CD4-positive, alpha-beta memory T cell (primary cell): ENCODE measurements at regions of chr1 and their contacts with region 1.

Region 1: DNA sequence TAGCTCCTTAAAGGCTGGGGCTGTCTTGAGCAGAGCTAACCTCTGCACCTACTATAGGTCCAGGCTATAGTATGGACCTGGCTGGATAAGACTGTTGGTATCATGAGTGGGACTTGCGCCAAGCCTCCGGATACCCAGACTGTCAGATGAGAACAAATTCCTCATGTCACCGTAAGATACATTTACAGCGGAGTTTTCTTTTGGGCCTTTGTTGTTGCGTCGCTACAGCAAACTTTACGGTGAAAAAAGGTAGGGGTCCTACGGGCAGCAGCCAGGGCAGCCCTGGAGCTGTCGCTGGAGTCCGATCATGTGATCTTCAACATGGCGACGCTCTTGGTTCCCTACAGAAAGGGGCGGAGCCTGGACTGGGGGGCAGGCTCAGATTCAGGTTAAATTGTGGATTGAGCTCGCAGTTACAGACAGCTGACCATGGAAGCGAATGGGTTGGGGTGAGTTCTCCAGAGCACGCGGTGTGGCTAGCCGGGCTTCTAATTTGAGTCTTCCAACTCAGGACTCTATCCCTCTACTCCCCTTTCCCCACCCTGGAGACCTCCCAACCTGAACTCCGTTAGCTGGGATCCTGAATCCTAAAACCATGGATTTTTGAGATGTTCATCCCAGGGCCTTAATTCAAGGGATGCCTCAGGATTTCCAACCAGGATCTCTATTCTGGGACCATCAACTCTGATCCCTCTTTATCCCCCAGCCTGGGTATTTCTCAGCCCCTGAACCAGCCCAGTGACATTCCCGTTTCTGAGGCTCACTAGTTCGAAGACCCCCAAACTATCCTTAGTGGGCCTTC is at the start of gene UROD:
- DNase-seq: peak; percentile 87 to 95 (median 91)
- H3K4me3 ChIP-seq: peak within 1 kb of the TSS; percentile 86 to 98
- H3K4me3 Mint-ChIP-seq: peak within 1 kb of the TSS; percentile 88 to 98 (median 96)
- H3K27ac ChIP-seq: peak within 1 kb of the TSS; percentile 71
- H3K27ac Mint-ChIP-seq: peak within 1 kb of the TSS; percentile 91 to 99 (median 96)
- H3K4me1 ChIP-seq: peaks cover 40% of the 10 kb centered on the region
- H3K4me1 Mint-ChIP-seq: peaks cover 29 to 60% (median 48%) of the 10 kb centered on the region in 4 donors
- H3K27me3 ChIP-seq: no peaks in the 10 kb centered on the region
- H3K27me3 Mint-ChIP-seq: no peaks in the 10 kb centered on the region
- total RNA-seq, gene UROD: 46.0 to 52.0 TPM

Region 2: GRCh38 chr1:44730741-44731512 is 281.1 kb before region 1 on chr1 and contains the start of gene RNU5D-1:
- CTCF ChIA-PET with region 1: interaction called, 24 read pairs
- POLR2A ChIA-PET with region 1: interaction called, 28 read pairs
- intact Hi-C with region 1: loop called (anchors 5 kb)
- DNase-seq: peak; percentile 90 to 94 (median 91)
- H3K4me3 ChIP-seq: peak within 1 kb of the TSS; percentile 31 to 39
- H3K4me3 Mint-ChIP-seq: peak within 1 kb of the TSS; percentile 54 to 93 (median 84)
- H3K27ac ChIP-seq: peak within 1 kb of the TSS; percentile 96
- H3K27ac Mint-ChIP-seq: peak within 1 kb of the TSS; percentile 97 to 100 (median 99)
- H3K4me1 ChIP-seq: peaks cover 22% of the 10 kb centered on the region
- H3K4me1 Mint-ChIP-seq: peaks cover 18 to 38% (median 24%) of the 10 kb centered on the region in 4 donors
- H3K27me3 ChIP-seq: no peaks in the 10 kb centered on the region
- H3K27me3 Mint-ChIP-seq: no peaks in the 10 kb centered on the region
- total RNA-seq, gene RNU5D-1: not detected

Region 3: GRCh38 chr1:44799770-44800584 is 212.1 kb before region 1 on chr1 and contains the start of gene PLK3:
- CTCF ChIA-PET with region 1: interaction called, 23 read pairs
- POLR2A ChIA-PET with region 1: interaction called, 63 read pairs
- intact Hi-C with region 1: loop called (anchors 2 kb)
- DNase-seq: peak; percentile 99 to 100 (median 99)
- H3K4me3 ChIP-seq: peak within 1 kb of the TSS; percentile 77 to 83
- H3K4me3 Mint-ChIP-seq: peak within 1 kb of the TSS; percentile 89 to 99 (median 96)
- H3K27ac ChIP-seq: peak within 1 kb of the TSS; percentile 96
- H3K27ac Mint-ChIP-seq: peak within 1 kb of the TSS; percentile 82 to 100 (median 99)
- H3K4me1 ChIP-seq: peaks cover 37% of the 10 kb centered on the region
- H3K4me1 Mint-ChIP-seq: peaks cover 23 to 48% (median 31%) of the 10 kb centered on the region in 4 donors
- H3K27me3 ChIP-seq: no peaks in the 10 kb centered on the region
- H3K27me3 Mint-ChIP-seq: no peaks in the 10 kb centered on the region
- total RNA-seq, gene PLK3: 151 to 153 TPM

Region 4: DNA sequence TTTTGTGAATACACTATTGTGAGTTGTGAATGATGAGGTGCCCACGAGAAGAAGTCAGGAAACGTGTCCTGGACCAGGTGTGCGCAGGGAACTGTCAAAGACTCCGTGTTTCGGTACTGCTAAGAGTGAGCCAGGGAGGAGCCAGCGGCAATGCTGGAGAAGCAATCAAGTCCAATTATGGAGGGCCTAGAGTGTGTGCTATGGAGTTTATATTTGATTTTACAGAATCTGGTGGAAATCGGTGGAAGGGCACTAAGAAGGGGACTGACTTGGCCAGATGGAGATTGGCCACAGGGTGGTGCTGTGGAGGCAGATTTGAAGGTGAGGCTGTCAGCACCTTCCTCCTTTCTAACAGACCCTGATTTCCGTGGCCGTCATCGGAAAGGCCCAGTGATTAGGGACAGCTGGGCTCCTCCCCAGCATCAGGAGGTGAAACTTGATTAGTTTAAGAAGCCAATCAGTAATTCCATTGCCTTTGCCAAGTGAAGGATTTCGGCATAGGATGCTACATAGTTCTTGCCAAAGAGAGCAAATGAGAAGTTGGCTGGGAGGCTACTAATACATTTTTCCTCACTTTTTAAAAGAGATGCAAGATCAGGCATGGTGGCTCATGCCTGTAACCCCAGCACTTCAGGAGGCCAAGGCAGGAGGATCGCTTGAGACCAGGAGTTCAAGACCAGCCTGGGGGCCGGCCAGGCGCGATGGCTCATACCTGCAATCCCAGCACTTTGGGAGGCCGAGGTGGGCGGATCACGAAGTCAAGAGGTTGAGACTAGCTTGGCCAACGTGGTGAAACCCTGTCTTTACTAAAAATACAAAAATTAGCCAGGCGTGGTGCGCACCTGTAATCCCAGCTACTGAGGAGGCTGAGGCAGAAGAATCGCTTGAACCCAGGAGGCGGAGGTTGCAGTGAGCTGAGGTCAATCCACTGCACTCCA is 176.0 kb before region 1 on chr1:
- CTCF ChIA-PET with region 1: interaction called, 4 read pairs
- POLR2A ChIA-PET with region 1: no interaction called
- intact Hi-C with region 1: loop called (anchors 2 kb)
- DNase-seq: peak; percentile 71 to 83 (median 75)
- H3K4me3 ChIP-seq: no peak overlapping the region
- H3K4me3 Mint-ChIP-seq: peak overlapping the region in 4 of 8 donors; percentile 19 to 69 (median 42)
- H3K27ac ChIP-seq: no peak overlapping the region
- H3K27ac Mint-ChIP-seq: peak overlapping the region in 6 of 7 donors; percentile 7 to 74 (median 58)
- H3K4me1 ChIP-seq: peaks cover 4% of the 10 kb centered on the region
- H3K4me1 Mint-ChIP-seq: peaks cover 5 to 9% (median 8%) of the 10 kb centered on the region in 4 donors
- H3K27me3 ChIP-seq: no peaks in the 10 kb centered on the region
- H3K27me3 Mint-ChIP-seq: peaks cover 5 to 10% of the 10 kb centered on the region in 2 donors

Region 5: DNA sequence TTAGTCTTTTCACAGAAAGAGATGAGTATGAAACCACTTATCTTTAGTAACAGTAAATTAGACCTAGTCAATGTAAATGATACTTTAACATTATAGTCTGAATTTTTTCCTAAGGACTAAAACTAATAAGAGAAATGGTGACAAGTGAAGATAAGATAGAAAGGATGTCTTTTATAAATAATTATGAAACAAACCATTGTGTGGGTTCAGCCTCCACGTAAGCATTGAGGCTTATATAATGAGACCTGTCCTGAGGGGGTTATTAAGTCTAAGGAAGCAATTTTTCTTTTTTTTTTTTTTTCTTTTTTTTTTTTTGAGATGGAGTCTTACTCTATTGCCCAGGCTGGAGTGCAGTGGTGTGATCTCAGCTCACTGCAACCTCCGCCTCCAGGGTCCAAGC is 55.8 kb after region 1 on chr1:
- CTCF ChIA-PET with region 1: no interaction called
- POLR2A ChIA-PET with region 1: no interaction called
- intact Hi-C with region 1: no loop called
- DNase-seq: no peak
- H3K4me3 ChIP-seq: no peak overlapping the region
- H3K4me3 Mint-ChIP-seq: no peak overlapping the region
- H3K27ac ChIP-seq: no peak overlapping the region
- H3K27ac Mint-ChIP-seq: no peak overlapping the region
- H3K4me1 ChIP-seq: no peaks in the 10 kb centered on the region
- H3K4me1 Mint-ChIP-seq: no peaks in the 10 kb centered on the region
- H3K27me3 ChIP-seq: no peaks in the 10 kb centered on the region
- H3K27me3 Mint-ChIP-seq: no peaks in the 10 kb centered on the region

Region 6: DNA sequence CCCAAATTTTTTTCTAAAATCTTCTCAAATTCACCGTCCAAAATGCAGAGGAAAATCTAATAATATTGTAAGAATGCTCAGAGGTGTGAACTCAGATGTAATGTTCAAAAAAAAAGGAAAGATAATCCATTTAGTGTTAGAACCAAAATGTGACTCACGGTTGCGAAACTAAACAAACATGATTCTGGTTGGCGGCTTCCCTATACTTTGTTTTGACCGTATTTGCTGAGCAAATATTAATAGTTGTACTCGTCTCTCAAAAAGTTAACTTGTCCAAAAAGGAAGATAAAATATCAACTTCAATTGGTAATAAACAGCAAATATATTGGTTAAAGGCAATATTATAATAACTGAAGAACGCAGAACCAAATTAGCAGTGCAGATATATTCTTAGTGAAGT is 160.0 kb after region 1 on chr1:
- CTCF ChIA-PET with region 1: no interaction called
- POLR2A ChIA-PET with region 1: no interaction called
- intact Hi-C with region 1: no loop called
- DNase-seq: no peak
- H3K4me3 ChIP-seq: no peak overlapping the region
- H3K4me3 Mint-ChIP-seq: no peak overlapping the region
- H3K27ac ChIP-seq: no peak overlapping the region
- H3K27ac Mint-ChIP-seq: no peak overlapping the region
- H3K4me1 ChIP-seq: no peaks in the 10 kb centered on the region
- H3K4me1 Mint-ChIP-seq: peaks cover 0 to 6% (median 2%) of the 10 kb centered on the region in 4 donors
- H3K27me3 ChIP-seq: no peaks in the 10 kb centered on the region
- H3K27me3 Mint-ChIP-seq: no peaks in the 10 kb centered on the region

Region 7: GRCh38 chr1:45230540-45230939 is 218.5 kb after region 1 on chr1:
- CTCF ChIA-PET with region 1: interaction called, 9 read pairs
- POLR2A ChIA-PET with region 1: no interaction called
- intact Hi-C with region 1: loop called (anchors 1 kb)
- DNase-seq: peak in 4 of 5 donors; percentile 11 to 26 (median 16)
- H3K4me3 ChIP-seq: no peak overlapping the region
- H3K4me3 Mint-ChIP-seq: no peak overlapping the region
- H3K27ac ChIP-seq: no peak overlapping the region
- H3K27ac Mint-ChIP-seq: no peak overlapping the region
- H3K4me1 ChIP-seq: no peaks in the 10 kb centered on the region
- H3K4me1 Mint-ChIP-seq: no peaks in the 10 kb centered on the region
- H3K27me3 ChIP-seq: no peaks in the 10 kb centered on the region
- H3K27me3 Mint-ChIP-seq: peaks cover 0 to 1% of the 10 kb centered on the region in 2 donors

Region 8: DNA sequence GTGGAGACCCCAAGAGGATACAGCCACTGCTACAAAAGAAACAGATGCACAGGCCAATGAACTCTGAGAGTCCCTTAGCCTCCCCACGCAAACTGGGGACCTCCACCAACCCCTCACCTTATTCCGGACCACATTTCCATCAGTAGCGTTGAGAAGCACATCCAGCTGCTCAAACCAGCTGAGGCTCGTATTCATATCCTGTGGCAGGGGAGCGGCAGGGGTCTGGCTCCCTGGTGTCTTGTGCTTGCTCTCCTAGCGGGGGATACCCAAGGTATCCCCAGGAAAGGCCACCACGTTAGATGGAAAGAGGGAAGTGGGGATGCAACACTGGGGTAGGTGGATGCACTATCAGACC is 487.4 kb after region 1 on chr1:
- CTCF ChIA-PET with region 1: interaction called, 122 read pairs
- POLR2A ChIA-PET with region 1: interaction called, 33 read pairs
- intact Hi-C with region 1: no loop called
- DNase-seq: peak in 1 of 5 donors; percentile 4
- H3K4me3 ChIP-seq: peak overlapping the region; percentile 62 to 88
- H3K4me3 Mint-ChIP-seq: peak overlapping the region; percentile 91 to 96 (median 95)
- H3K27ac ChIP-seq: peak overlapping the region; percentile 62
- H3K27ac Mint-ChIP-seq: peak overlapping the region; percentile 81 to 98 (median 96)
- H3K4me1 ChIP-seq: peaks cover 18% of the 10 kb centered on the region
- H3K4me1 Mint-ChIP-seq: peaks cover 31 to 34% (median 31%) of the 10 kb centered on the region in 4 donors
- H3K27me3 ChIP-seq: no peaks in the 10 kb centered on the region
- H3K27me3 Mint-ChIP-seq: no peaks in the 10 kb centered on the region

Region 9: GRCh38 chr1:45686317-45687013 is 674.4 kb after region 1 on chr1 and contains the start of gene GPBP1L1:
- CTCF ChIA-PET with region 1: no interaction called
- POLR2A ChIA-PET with region 1: interaction called, 6 read pairs
- intact Hi-C with region 1: loop called (anchors 1 kb)
- DNase-seq: peak; percentile 97 to 98 (median 97)
- H3K4me3 ChIP-seq: peak within 1 kb of the TSS; percentile 99 to 100
- H3K4me3 Mint-ChIP-seq: peak within 1 kb of the TSS; percentile 95 to 100 (median 99)
- H3K27ac ChIP-seq: peak within 1 kb of the TSS; percentile 94
- H3K27ac Mint-ChIP-seq: peak within 1 kb of the TSS; percentile 98 to 100 (median 100)
- H3K4me1 ChIP-seq: peaks cover 63% of the 10 kb centered on the region
- H3K4me1 Mint-ChIP-seq: peaks cover 28 to 68% (median 46%) of the 10 kb centered on the region in 4 donors
- H3K27me3 ChIP-seq: no peaks in the 10 kb centered on the region
- H3K27me3 Mint-ChIP-seq: no peaks in the 10 kb centered on the region
- total RNA-seq, gene GPBP1L1: 175 to 187 TPM